SK-N-SH (cell line): ENCODE measurements at regions of chr19 and their contacts with region 1.

Region 1: GRCh38 chr19:10769533-10770491 is 51.9 kb downstream of the DNM2 start:
- DNase-seq: peak; percentile 80
- H3K4me3 ChIP-seq: no peak overlapping the region
- H3K27ac ChIP-seq: peak overlapping the region; percentile 38 to 56; a peak in 2 of 4 replicates
- H3K4me1 ChIP-seq: peaks cover 17 to 30% of the 10 kb centered on the region in 2 experiments
- H3K27me3 ChIP-seq: no peaks in the 10 kb centered on the region
- CTCF ChIP-seq: peak; percentile 37
- EP300 ChIP-seq: no peak
- RAD21 ChIP-seq: peak; percentile 76

Region 2: GRCh38 chr19:10820173-10820572 is 50.4 kb after region 1 on chr19:
- CTCF ChIA-PET with region 1: interaction called, 16 read pairs
- POLR2A ChIA-PET with region 1: no interaction called
- DNase-seq: peak; percentile 58
- H3K4me3 ChIP-seq: no peak overlapping the region
- H3K27ac ChIP-seq: peak overlapping the region in 1 of 2 experiments; percentile 58; a peak in 2 of 4 replicates
- H3K4me1 ChIP-seq: peaks cover 28 to 53% of the 10 kb centered on the region in 2 experiments; a peak in 3 of 4 replicates
- H3K27me3 ChIP-seq: no peaks in the 10 kb centered on the region
- CTCF ChIP-seq: peak; percentile 42
- EP300 ChIP-seq: no peak
- RAD21 ChIP-seq: peak; percentile 35; the same call in 1 of the 2 replicates

Region 3: GRCh38 chr19:10858204-10858828 is 88.5 kb after region 1 on chr19:
- CTCF ChIA-PET with region 1: interaction called, 37 read pairs
- POLR2A ChIA-PET with region 1: no interaction called
- DNase-seq: peak; percentile 69
- H3K4me3 ChIP-seq: peak overlapping the region in 1 of 2 experiments; percentile 52; a peak in 1 of 4 replicates
- H3K27ac ChIP-seq: no peak overlapping the region
- H3K4me1 ChIP-seq: no peaks in the 10 kb centered on the region
- H3K27me3 ChIP-seq: no peaks in the 10 kb centered on the region
- CTCF ChIP-seq: peak; percentile 95
- EP300 ChIP-seq: no peak
- RAD21 ChIP-seq: peak; percentile 47